ENCODE measurements at regions of chr5 and their contacts with region 1.

Region 1: GRCh38 chr5:95087816-95088317 is 197.0 kb downstream of the MCTP1 start:
- H3K4me3 Mint-ChIP-seq: peak overlapping the region; percentile 62
- H3K27ac Mint-ChIP-seq: peak overlapping the region; percentile 98
- H3K4me1 Mint-ChIP-seq: peaks cover 47% of the 10 kb centered on the region
- H3K27me3 Mint-ChIP-seq: no peaks in the 10 kb centered on the region

Region 2: DNA sequence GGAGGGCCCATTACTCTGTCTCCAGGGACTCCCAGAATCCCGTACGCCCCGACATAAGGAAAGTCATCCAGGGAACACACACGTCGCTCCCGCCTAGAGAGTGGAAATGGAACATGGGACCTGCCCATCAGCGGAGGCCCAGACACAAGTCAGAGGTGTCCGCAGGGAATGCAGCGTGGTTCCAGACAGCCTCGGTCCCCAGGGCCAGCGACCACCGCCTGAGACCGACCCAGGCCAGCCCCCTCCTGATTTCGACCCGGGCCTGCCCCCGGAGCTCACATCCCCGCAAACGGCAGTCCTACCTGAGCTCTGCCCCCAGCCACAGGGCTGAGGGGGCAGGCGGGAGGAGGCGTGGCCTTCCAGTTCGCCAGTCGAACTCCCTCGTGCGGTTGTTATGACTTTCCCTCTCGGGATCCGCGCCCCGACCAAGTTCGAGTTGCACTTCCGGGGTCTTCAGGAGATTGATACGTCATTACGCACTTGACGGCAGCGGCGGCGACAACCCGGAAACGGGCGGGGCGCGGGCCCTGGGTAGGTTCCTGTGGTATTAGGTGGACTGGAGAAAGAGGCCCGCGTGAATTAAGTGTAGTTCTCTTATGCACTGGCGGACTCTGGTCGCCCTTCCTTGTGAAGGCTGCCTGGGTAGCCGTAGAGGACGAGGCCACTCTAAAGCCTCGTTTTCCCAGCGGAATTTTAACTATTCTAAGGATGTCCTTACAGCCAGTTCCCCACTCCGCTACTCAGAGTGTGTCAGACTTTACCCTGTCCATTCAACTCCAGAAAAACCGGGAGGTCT is 976.5 kb before region 1 on chr5:
- intact Hi-C with region 1: loop called (anchors 5 kb)
- H3K4me3 Mint-ChIP-seq: peak overlapping the region; percentile 96
- H3K27ac Mint-ChIP-seq: peak overlapping the region; percentile 96
- H3K4me1 Mint-ChIP-seq: peaks cover 38% of the 10 kb centered on the region
- H3K27me3 Mint-ChIP-seq: peaks cover 8% of the 10 kb centered on the region

Region 3: DNA sequence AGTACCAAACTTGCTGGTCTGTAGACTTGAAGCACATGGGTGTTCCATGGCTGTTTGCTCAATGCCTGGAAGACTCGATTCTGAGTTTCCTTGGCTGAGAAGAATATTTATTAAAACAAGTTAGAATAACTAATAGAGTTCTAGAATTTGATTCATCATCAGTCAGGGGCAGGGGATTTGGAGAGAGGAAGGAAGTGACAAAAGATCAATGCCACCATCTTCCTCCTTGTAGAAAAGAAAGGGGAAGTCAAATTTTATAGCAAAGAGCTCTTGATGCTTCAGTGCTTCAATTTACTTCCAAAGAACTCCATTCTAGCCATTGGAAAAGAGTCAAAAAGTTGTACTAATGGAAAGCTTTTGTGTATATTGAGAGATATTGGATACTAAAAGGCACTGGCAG is 39.2 kb before region 1 on chr5:
- intact Hi-C with region 1: loop called (anchors 5 kb)
- H3K4me3 Mint-ChIP-seq: peak overlapping the region; percentile 20
- H3K27ac Mint-ChIP-seq: peak overlapping the region; percentile 92
- H3K4me1 Mint-ChIP-seq: peaks cover 55% of the 10 kb centered on the region
- H3K27me3 Mint-ChIP-seq: no peaks in the 10 kb centered on the region

Measured in dendritic cell treated with granulocyte-macrophage colony-stimulating factor and Interleukin-4, amounts not matched to agents 40 ng/mL and 50 ng/mL, for 4 days (primary cell).